ENCODE measurements at regions of chr6 and their contacts with region 1.

Region 1: GRCh38 chr6:47380251-47380650 is 70.5 kb upstream of the TNFRSF21 start:
- DNase-seq: no peak
- ATAC-seq: no peak
- H3K4me3 ChIP-seq: no peak overlapping the region
- H3K27ac ChIP-seq: no peak overlapping the region
- H3K4me1 ChIP-seq: no peaks in the 10 kb centered on the region
- H3K27me3 ChIP-seq: no peaks in the 10 kb centered on the region
- CTCF ChIP-seq: no peak

Region 2: DNA sequence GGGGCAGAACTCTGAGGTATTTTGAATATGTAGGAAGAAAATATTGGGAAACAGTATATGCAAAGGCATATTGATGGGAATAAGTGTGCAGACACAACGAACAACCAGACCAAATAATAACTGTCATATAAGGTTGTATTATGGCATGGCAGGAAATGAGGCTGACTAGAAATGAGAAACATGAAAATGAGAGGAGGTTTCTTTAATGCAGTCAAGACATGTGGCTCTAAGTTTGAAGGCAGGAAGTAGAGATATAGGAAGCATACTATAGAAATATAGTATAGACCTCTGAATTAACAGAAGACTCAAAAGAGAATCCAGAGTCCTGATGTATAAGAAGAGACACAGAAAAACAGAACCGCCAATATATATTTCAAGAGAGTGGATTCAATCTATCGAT is 1190.4 kb after region 1 on chr6:
- intact Hi-C with region 1: loop called in 1 of 2 experiments (anchors 10 kb)
- DNase-seq: no peak
- ATAC-seq: no peak
- H3K4me3 ChIP-seq: no peak overlapping the region
- H3K27ac ChIP-seq: no peak overlapping the region
- H3K4me1 ChIP-seq: no peaks in the 10 kb centered on the region
- H3K27me3 ChIP-seq: no peaks in the 10 kb centered on the region
- CTCF ChIP-seq: no peak

Measured in psoas muscle (tissue), 8 donors.